Activated CD4-positive, alpha-beta T cell treated with anti-CD3 and anti-CD28 coated beads for 36 hours (primary cell): ENCODE measurements at regions of chr2 and their contacts with region 1.

Region 1: GRCh38 chr2:181904022-181904632 is 12.6 kb downstream of the ITPRID2 start:
- DNase-seq: no peak
- ATAC-seq: no peak
- H3K4me3 Mint-ChIP-seq: no peak overlapping the region
- H3K27ac Mint-ChIP-seq: no peak overlapping the region
- H3K4me1 Mint-ChIP-seq: peaks cover 21% of the 10 kb centered on the region
- H3K27me3 Mint-ChIP-seq: no peaks in the 10 kb centered on the region

Region 2: DNA sequence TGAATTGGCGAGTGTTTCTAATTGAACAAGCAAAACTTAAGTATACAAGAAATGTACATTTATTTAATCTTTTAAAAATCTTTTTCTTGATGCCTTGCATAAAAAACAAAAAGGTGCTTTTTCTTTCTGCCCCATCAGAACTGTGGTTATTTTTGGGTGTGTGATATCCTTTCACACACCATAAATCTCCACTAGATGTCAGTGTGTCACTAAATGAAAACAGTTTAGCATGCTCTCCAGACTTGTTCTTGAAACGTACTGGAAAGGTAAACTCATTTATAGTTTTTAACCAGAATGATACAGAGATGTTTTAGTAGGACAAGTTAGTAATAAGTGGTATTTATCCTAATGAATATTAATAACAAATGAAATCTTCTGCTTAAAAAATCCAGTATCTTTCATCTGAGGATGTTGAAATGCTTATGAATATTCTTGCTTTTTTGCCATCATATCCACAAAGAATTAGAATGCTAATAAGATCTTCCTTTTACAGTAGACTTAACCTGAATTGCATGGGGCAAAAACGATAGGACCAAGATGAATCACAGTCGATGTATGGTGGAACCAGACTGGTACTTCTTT is 826.9 kb before region 1 on chr2:
- CTCF ChIA-PET with region 1: no interaction called
- POLR2A ChIA-PET with region 1: no interaction called
- intact Hi-C with region 1: loop called (anchors 10 kb)
- DNase-seq: no peak
- ATAC-seq: peak; percentile 90
- H3K4me3 Mint-ChIP-seq: no peak overlapping the region
- H3K27ac Mint-ChIP-seq: no peak overlapping the region
- H3K4me1 Mint-ChIP-seq: peaks cover 5% of the 10 kb centered on the region
- H3K27me3 Mint-ChIP-seq: no peaks in the 10 kb centered on the region

Region 3: DNA sequence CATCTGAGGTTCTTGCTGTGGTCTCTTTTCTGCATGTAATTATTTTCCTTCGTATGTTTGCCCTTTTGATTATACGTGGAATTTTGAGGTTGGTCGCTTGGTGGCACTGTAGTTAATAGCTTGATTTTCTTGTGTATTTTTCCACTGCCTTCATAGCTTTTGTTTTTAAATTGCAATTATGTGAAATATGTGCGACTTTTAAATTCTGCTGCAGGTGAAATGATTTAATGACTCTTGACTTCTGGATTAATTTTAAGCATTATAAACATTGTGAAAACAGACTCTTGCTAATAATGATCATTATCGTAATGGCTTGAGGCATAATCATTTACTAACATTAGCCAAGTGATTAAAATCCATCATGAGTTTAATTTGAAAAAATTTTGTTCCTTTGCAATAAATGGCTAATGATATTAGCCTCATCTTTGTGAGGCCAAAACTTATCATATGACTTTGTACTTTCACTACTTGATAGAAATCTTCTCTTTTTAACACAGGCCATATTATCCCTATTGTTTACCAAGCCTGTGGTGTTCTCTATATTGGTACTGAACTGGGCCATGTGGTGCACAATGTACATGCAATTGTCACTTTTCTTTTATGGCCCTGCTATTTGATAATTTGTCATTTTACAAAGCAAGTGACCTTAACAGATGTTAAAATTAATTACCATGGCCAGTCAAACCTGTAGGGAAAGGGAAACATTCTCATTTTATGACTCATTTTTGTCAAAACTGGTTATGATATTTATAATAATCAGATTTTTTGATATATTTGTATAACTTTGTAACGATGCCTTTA is 161.0 kb before region 1 on chr2:
- CTCF ChIA-PET with region 1: interaction called, 24 read pairs
- POLR2A ChIA-PET with region 1: no interaction called
- intact Hi-C with region 1: loop called (anchors 1 kb)
- DNase-seq: peak; percentile 56
- ATAC-seq: no peak
- H3K4me3 Mint-ChIP-seq: no peak overlapping the region
- H3K27ac Mint-ChIP-seq: no peak overlapping the region
- H3K4me1 Mint-ChIP-seq: peaks cover 4% of the 10 kb centered on the region
- H3K27me3 Mint-ChIP-seq: peaks cover under 1% of the 10 kb centered on the region

Region 4: GRCh38 chr2:181805228-181806038 is 98.7 kb before region 1 on chr2:
- CTCF ChIA-PET with region 1: no interaction called
- POLR2A ChIA-PET with region 1: no interaction called
- intact Hi-C with region 1: no loop called
- DNase-seq: no peak
- ATAC-seq: no peak
- H3K4me3 Mint-ChIP-seq: no peak overlapping the region
- H3K27ac Mint-ChIP-seq: no peak overlapping the region
- H3K4me1 Mint-ChIP-seq: no peaks in the 10 kb centered on the region
- H3K27me3 Mint-ChIP-seq: peaks cover 7% of the 10 kb centered on the region

Region 5: GRCh38 chr2:181876614-181877063 is 27.5 kb before region 1 on chr2:
- CTCF ChIA-PET with region 1: no interaction called
- POLR2A ChIA-PET with region 1: no interaction called
- intact Hi-C with region 1: no loop called
- DNase-seq: no peak
- ATAC-seq: peak; percentile 44
- H3K4me3 Mint-ChIP-seq: no peak overlapping the region
- H3K27ac Mint-ChIP-seq: no peak overlapping the region
- H3K4me1 Mint-ChIP-seq: no peaks in the 10 kb centered on the region
- H3K27me3 Mint-ChIP-seq: no peaks in the 10 kb centered on the region

Region 6: GRCh38 chr2:182038578-182038977 is 134.5 kb after region 1 on chr2:
- CTCF ChIA-PET with region 1: no interaction called
- POLR2A ChIA-PET with region 1: no interaction called
- intact Hi-C with region 1: no loop called
- DNase-seq: no peak
- ATAC-seq: no peak
- H3K4me3 Mint-ChIP-seq: no peak overlapping the region
- H3K27ac Mint-ChIP-seq: no peak overlapping the region
- H3K4me1 Mint-ChIP-seq: no peaks in the 10 kb centered on the region
- H3K27me3 Mint-ChIP-seq: peaks cover under 1% of the 10 kb centered on the region